ENCODE measurements at regions of chr6 and their contacts with region 1.

Region 1: GRCh38 chr6:36765594-36766398 is 68.2 kb downstream of the RAB44 start:
- DNase-seq: peak; percentile 65
- H3K4me3 ChIP-seq: no peak overlapping the region
- H3K27ac ChIP-seq: no peak overlapping the region
- H3K4me1 ChIP-seq: peaks cover 15% of the 10 kb centered on the region
- H3K27me3 ChIP-seq: no peaks in the 10 kb centered on the region
- CTCF ChIP-seq: peak; percentile 90 to 96
- POLR2A ChIP-seq: no peak

Region 2: DNA sequence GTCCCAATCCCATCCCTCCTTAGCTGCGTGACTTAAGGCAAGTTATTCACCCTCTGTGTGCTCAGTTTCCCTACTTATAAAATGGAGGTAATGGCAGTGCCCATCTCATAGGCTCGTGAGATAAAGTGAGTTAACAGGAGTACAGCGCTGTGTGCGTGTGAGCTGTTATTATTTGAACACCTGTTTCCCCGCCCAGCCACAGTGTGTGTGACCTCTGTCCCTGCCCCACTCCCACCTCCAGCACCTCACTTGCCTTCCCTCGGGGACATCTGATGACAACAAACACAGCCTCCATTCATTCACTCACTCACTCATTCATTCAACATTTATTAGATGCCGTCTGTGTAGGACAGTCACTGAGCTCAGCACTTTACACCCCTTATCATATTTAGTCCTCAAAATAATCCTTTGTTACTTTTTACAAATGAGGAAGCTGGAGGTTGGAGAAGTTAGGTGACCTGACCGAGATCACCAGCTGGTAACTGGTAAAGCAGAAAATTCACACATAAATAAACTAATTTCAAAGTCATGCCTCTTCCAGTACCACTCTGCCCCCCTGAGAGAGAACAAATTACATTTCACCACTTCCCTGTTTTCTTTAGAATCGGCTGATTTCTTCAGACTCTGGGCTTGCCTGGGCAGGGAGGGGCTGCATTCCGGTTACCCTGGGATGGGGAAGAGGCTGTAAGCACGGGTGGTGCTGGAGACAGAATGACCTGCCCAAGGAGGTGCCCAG is 14.8 kb after region 1 on chr6:
- CTCF ChIA-PET with region 1: interaction called, 193 read pairs
- POLR2A ChIA-PET with region 1: no interaction called
- dilution Hi-C with region 1: no loop called
- intact Hi-C with region 1: no loop called
- DNase-seq: no peak
- H3K4me3 ChIP-seq: no peak overlapping the region
- H3K27ac ChIP-seq: no peak overlapping the region
- H3K4me1 ChIP-seq: no peaks in the 10 kb centered on the region
- H3K27me3 ChIP-seq: no peaks in the 10 kb centered on the region
- CTCF ChIP-seq: no peak
- POLR2A ChIP-seq: no peak

Region 3: GRCh38 chr6:36827261-36828079 is 61.7 kb after region 1 on chr6:
- CTCF ChIA-PET with region 1: interaction called, 13 read pairs
- POLR2A ChIA-PET with region 1: no interaction called
- dilution Hi-C with region 1: no loop called
- intact Hi-C with region 1: loop called (anchors 2 kb)
- DNase-seq: peak; percentile 99
- H3K4me3 ChIP-seq: peak overlapping the region in 1 of 3 experiments; percentile 13
- H3K27ac ChIP-seq: peak overlapping the region; percentile 100
- H3K4me1 ChIP-seq: peaks cover 72% of the 10 kb centered on the region
- H3K27me3 ChIP-seq: no peaks in the 10 kb centered on the region
- CTCF ChIP-seq: no peak
- POLR2A ChIP-seq: peak; percentile 59

Region 4: DNA sequence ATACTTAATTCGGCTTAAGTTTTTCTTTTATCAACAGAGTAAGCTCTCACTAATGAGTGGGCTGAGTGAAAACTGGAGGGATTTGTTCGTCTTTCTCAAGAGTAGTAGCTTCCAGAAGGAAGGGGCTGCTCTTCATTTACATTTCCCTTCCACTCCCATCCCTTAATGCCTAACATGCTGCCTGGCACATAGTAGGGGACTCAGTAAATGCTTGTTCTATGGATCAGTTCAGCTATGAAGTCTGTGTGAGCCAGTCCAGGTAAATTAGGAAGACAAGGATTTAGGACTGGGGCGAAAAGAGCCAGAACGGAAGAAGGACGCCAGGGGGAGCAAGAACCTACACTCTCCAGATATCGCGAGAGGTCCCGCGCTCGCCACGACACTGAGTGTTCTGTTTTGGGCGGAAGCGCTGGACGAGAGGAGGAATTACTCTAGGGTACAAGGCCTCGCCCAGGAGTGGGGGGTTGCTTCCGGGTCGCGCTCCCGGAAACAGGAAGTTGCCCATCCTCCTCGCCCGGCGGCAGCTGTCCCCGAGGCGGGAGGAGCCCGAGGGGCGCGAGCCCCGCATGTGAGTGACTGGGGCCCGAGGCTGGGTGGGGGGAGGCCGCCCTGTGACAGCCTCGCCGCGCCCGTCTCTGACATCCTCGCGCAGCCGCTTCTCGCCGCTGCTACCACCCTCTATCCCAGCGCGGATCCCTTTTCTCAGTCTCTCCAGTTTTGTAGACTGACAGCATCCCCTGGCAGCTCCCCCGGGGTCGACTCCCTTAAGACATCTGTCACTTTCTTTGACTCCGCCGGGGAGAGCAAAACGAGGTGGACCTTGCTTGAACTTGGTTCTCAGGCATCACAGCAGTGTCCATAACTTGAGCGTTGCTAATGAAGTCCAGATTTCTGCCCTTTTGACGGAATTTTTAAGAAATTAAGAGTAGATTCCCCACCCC is 119.9 kb after region 1 on chr6 and contains the start of gene C6orf89:
- CTCF ChIA-PET with region 1: interaction called, 18 read pairs
- POLR2A ChIA-PET with region 1: no interaction called
- dilution Hi-C with region 1: no loop called
- intact Hi-C with region 1: no loop called
- DNase-seq: peak; percentile 96
- H3K4me3 ChIP-seq: peak within 1 kb of the TSS; percentile 77 to 95 (median 84)
- H3K27ac ChIP-seq: peak within 1 kb of the TSS; percentile 76
- H3K4me1 ChIP-seq: peaks cover 12% of the 10 kb centered on the region
- H3K27me3 ChIP-seq: no peaks in the 10 kb centered on the region
- CTCF ChIP-seq: peak; percentile 78 to 84
- POLR2A ChIP-seq: peak; percentile 89
- total RNA-seq, gene C6orf89: 34.0 and 36.4 TPM in 2 replicates

Region 5: DNA sequence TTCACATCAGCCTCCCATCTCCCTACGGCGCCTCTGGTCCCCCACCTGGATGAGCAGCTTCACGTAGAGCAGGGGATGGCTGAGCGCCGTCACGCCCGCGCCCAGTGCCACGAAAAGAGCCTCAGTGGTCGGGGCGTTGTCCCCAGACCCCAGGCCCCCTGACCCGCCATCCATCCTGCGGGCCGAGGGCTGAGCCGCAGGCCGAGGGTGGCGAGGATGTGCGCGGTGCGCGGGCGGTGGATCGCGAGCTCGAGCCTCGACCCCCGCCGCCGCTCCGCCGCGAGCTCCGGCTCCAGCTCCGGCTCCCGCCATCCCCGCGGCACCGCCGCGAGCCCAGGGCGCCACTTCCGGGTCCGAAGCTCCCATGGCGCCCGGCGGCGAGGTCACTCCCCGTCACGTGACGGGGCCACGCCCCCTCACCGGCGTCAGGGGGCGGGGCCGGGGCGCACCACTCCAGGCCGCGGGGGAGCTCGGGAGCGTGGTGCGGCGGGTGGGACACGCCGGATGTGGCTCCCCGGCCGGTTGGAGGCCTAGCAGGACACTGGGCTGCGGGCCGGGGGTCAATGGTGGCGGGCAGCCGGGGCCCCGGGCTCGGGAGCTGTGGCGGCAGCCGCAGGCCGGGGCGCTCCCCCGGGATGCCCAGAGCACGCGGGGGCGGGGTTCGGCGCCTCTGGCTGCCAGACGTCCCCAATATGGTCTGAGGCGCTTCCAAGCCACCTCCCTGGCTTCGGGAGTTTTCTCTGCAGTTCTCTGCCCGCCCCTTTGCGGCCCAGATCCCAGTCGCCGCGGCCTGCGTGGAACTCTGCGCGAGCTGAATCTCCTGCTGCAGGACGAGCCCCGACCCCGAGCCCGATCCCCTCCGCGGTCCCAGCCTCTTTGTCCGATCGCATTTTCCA is 220.3 kb after region 1 on chr6 and contains the start of gene MTCH1:
- CTCF ChIA-PET with region 1: interaction called, 3 read pairs
- POLR2A ChIA-PET with region 1: no interaction called
- dilution Hi-C with region 1: no loop called
- intact Hi-C with region 1: loop called (anchors 10 kb)
- DNase-seq: peak; percentile 86
- H3K4me3 ChIP-seq: peak within 1 kb of the TSS; percentile 71 to 95 (median 87)
- H3K27ac ChIP-seq: peak within 1 kb of the TSS; percentile 71
- H3K4me1 ChIP-seq: peaks cover 29% of the 10 kb centered on the region
- H3K27me3 ChIP-seq: peaks cover 0 to 5% of the 10 kb centered on the region in 2 experiments
- CTCF ChIP-seq: no peak
- POLR2A ChIP-seq: peak; percentile 97
- total RNA-seq, gene MTCH1: 218 and 226 TPM in 2 replicates

Region 6: DNA sequence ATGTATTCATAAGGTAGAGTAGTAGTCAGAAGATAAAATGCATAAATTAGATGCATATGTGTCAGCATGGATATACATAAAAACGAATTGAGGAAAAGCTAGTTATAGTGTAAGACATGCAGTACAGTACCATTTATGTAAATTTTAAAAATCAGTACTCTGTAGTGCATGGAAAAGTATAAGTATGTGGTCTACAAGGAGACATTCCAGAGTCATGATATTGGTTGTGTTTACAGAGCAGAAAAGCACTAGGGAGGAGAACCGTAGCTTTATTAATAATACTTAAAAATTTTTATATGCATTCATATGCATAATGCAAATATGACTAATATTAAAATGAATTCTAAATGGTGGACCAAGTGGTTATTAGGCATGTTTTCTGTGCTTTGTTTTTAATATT is 1273.7 kb after region 1 on chr6:
- CTCF ChIA-PET with region 1: no interaction called
- POLR2A ChIA-PET with region 1: no interaction called
- dilution Hi-C with region 1: no loop called
- intact Hi-C with region 1: no loop called
- DNase-seq: no peak
- H3K4me3 ChIP-seq: no peak overlapping the region
- H3K27ac ChIP-seq: no peak overlapping the region
- H3K4me1 ChIP-seq: no peaks in the 10 kb centered on the region
- H3K27me3 ChIP-seq: no peaks in the 10 kb centered on the region
- CTCF ChIP-seq: no peak
- POLR2A ChIP-seq: no peak